ENCODE measurements at regions of chr11 and their contacts with region 1.

Region 1: DNA sequence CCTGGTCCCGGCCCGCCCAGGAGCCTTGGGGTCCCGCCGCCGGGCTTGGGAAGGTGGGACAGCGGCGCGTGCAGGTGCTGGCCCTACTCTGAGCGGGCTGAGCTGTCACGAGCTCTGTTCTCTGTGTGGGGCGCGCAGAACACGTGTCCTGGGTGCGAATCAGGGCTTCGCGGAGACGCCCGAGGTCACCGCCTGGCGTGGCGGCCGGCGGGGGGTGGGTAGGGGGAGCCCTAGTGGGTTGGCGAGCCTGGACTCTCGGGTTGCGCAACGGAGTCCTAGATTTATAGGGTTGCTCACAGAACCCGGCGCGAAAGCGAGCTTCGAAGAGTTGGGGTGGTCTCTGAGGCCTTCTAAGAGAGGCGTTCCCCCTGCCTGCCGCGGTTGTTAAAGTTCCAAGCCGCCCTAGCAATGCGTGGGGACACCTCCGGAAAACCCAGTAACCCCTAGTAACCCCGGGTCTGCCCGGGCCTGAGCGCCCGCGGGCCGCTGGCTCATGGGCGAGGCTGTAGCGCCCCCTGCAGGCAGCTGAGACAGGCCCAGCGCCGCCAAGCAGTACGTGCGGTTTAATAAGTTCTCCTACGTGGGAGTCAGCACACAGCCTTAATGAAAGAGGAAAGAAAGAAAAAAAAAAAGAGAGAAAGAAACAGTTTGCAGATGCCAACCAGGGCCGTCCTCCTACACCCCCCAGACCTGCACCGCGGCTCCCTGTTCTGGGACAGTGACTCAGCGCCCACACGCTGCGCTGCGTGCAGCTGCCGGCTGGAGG is 2.8 kb downstream of the ADM start:
- DNase-seq: peak; percentile 87
- H3K4me3 Mint-ChIP-seq: peak overlapping the region; percentile 81
- H3K27ac Mint-ChIP-seq: peak overlapping the region; percentile 59
- H3K4me1 Mint-ChIP-seq: peaks cover 33% of the 10 kb centered on the region
- H3K27me3 Mint-ChIP-seq: peaks cover 41% of the 10 kb centered on the region

Region 2: DNA sequence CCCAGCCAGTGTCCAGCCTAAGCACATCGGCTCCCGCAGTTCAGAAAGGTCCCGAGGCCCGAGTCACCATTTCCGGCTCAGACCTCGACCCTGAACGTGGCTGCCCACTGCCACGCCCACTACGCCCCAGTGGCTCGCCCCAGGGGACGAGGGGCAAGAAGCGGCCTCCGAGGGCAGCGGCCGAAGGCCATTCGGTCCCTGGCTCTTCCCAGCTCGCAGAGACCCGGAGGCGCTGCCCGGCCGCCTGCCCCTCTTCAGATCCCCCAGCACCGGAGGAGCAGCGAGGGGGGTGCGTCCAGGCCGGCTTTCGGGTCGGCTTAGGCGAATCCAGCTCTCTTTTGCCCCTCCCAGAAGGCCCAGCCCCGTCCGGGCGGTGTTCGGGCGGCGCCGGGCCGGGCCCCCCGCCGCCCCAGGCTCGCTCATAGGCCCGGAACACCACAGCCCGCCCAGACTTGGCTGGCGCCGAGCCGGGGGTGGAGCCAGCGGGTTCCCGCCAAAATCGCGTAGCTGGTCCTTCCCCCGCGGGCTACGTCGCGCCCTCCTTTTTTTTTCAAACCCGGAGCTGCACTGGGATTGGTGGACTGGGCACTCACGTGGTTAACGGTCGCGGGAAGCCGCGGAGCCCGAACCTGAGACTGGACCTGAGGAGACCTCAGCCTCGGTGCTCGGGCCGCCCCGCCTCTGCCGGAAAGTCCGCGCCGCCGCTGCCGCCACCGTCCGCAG is 734.4 kb before region 1 on chr11 and contains the start of gene WEE1:
- CTCF ChIA-PET with region 1: no interaction called
- intact Hi-C with region 1: loop called (anchors 2 kb)
- DNase-seq: peak; percentile 99
- H3K4me3 Mint-ChIP-seq: peak within 1 kb of the TSS; percentile 93
- H3K27ac Mint-ChIP-seq: peak within 1 kb of the TSS; percentile 77
- H3K4me1 Mint-ChIP-seq: peaks cover 27% of the 10 kb centered on the region
- H3K27me3 Mint-ChIP-seq: peaks cover 10% of the 10 kb centered on the region
- total RNA-seq, gene WEE1: 41.8 to 46.6 TPM

Region 3: GRCh38 chr11:9972989-9973388 is 334.6 kb before region 1 on chr11:
- CTCF ChIA-PET with region 1: interaction called, 8 read pairs
- intact Hi-C with region 1: loop called (anchors 1 kb)
- DNase-seq: peak; percentile 54
- H3K4me3 Mint-ChIP-seq: no peak overlapping the region
- H3K27ac Mint-ChIP-seq: no peak overlapping the region
- H3K4me1 Mint-ChIP-seq: no peaks in the 10 kb centered on the region
- H3K27me3 Mint-ChIP-seq: no peaks in the 10 kb centered on the region

Region 4: GRCh38 chr11:10293423-10294289 is 14.0 kb before region 1 on chr11 and contains the start of gene SBF2:
- CTCF ChIA-PET with region 1: interaction called, 8 read pairs
- intact Hi-C with region 1: loop called (anchors 1 kb)
- DNase-seq: peak; percentile 76
- H3K4me3 Mint-ChIP-seq: peak within 1 kb of the TSS; percentile 73
- H3K27ac Mint-ChIP-seq: no peak within 1 kb of the TSS
- H3K4me1 Mint-ChIP-seq: peaks cover 31% of the 10 kb centered on the region
- H3K27me3 Mint-ChIP-seq: peaks cover 27% of the 10 kb centered on the region
- total RNA-seq, gene SBF2: 8.7 to 9.9 TPM

Region 5: GRCh38 chr11:10455637-10456487 is 148.2 kb after region 1 on chr11:
- CTCF ChIA-PET with region 1: no interaction called
- intact Hi-C with region 1: loop called (anchors 5 kb)
- DNase-seq: peak; percentile 87
- H3K4me3 Mint-ChIP-seq: peak overlapping the region; percentile 82
- H3K27ac Mint-ChIP-seq: peak overlapping the region; percentile 93
- H3K4me1 Mint-ChIP-seq: peaks cover 85% of the 10 kb centered on the region
- H3K27me3 Mint-ChIP-seq: no peaks in the 10 kb centered on the region

Measured in activated naive CD4-positive, alpha-beta T cell treated with anti-CD3 and anti-CD28 coated beads for 36 hours (primary cell).